Caco-2 (cell line): ENCODE measurements at regions of chr10 and their contacts with region 1.

Region 1: DNA sequence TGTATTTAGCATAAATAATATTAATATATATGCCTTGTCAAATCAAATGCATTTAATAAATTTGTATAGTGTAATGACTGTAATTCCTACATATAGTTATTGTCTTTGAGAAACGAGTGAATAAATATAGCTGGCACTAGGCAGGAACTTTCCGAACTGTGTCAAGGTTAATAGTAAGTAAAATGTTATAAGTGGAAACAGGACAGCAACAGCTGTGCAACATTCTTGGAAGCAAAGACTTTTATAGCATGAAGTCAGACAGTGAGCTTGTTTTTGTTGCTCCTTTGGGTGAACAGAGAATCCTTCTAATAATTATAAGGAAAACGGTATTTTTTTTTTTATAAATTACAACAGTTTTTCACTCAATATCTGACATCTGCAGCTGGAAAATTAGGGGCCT is 14.0 kb upstream of the EXOC6 start:
- DNase-seq: no peak
- H3K4me3 ChIP-seq: no peak overlapping the region
- H3K4me3 Mint-ChIP-seq: no peak overlapping the region
- H3K27ac Mint-ChIP-seq: no peak overlapping the region
- H3K4me1 ChIP-seq: peaks cover 13% of the 10 kb centered on the region; the same call in 1 of the 2 replicates
- H3K4me1 Mint-ChIP-seq: peaks cover 7% of the 10 kb centered on the region
- H3K27me3 ChIP-seq: no peaks in the 10 kb centered on the region
- H3K27me3 Mint-ChIP-seq: no peaks in the 10 kb centered on the region
- CTCF ChIP-seq: no peak

Region 2: DNA sequence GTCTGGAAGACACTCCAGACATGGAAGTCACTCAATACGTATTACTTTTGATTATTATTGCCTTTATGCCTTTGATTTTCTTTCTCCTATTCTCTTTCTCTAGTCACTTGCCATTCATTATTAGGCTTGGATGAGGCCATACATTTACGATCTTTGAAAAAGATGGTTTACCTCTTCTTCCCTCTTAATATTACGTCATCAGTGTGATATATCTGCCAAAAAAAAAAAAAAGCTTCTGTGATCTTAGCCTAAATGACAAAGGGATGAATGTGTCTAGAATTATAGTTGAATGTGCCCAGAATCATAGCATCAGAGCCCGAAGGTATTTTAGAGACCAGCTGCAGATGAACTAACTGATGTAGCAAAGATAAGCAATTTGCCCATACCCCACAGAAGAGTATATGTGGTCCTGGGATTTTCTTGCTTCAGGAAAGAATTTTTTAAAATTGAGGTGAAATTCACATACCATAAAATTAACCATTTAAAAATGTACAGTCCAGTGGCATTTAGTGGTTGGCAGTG is 70.6 kb before region 1 on chr10:
- CTCF ChIA-PET with region 1: no interaction called
- POLR2A ChIA-PET with region 1: interaction called, 19 read pairs
- intact Hi-C with region 1: no loop called
- DNase-seq: no peak
- H3K4me3 ChIP-seq: no peak overlapping the region
- H3K4me3 Mint-ChIP-seq: no peak overlapping the region
- H3K27ac Mint-ChIP-seq: no peak overlapping the region
- H3K4me1 ChIP-seq: no peaks in the 10 kb centered on the region
- H3K4me1 Mint-ChIP-seq: no peaks in the 10 kb centered on the region
- H3K27me3 ChIP-seq: no peaks in the 10 kb centered on the region
- H3K27me3 Mint-ChIP-seq: peaks cover 15% of the 10 kb centered on the region
- CTCF ChIP-seq: no peak